PC-3 (cell line): ENCODE measurements at regions of chr2 and their contacts with region 1.

Region 1: DNA sequence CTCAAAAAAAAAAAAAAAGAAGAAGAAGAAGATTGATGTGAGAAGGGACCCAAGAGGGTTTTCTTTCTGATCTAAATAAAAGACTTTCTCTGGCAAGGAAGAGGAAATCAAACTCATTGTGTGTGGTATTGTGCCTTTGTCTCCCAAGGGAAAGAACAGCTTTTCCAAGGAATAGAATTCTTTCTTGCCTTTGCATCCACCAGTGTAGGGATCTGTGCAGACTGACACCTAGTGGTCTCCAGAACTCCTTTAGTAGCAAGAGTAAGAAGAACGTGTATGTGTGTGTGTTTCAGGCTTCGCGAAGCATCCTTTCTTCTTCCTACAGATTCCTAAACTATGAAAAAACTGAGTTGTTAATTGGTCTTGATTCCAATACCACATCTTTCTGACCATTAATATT is 33.5 kb upstream of the CRIM1 start:
- DNase-seq: peak; percentile 51
- ATAC-seq: peak; percentile 70; the same call in 1 of the 2 replicates
- H3K4me3 ChIP-seq: no peak overlapping the region
- H3K27ac ChIP-seq: no peak overlapping the region
- H3K4me1 ChIP-seq: no peaks in the 10 kb centered on the region
- H3K27me3 ChIP-seq: no peaks in the 10 kb centered on the region
- CTCF ChIP-seq: peak; percentile 75

Region 2: GRCh38 chr2:35871672-35872071 is 450.4 kb before region 1 on chr2:
- CTCF ChIA-PET with region 1: no interaction called
- POLR2A ChIA-PET with region 1: no interaction called
- intact Hi-C with region 1: loop called (anchors 5 kb)
- DNase-seq: peak; percentile 61
- ATAC-seq: peak; percentile 60; the same call in 1 of the 2 replicates
- H3K4me3 ChIP-seq: no peak overlapping the region
- H3K27ac ChIP-seq: no peak overlapping the region
- H3K4me1 ChIP-seq: no peaks in the 10 kb centered on the region
- H3K27me3 ChIP-seq: no peaks in the 10 kb centered on the region
- CTCF ChIP-seq: peak; percentile 65

Region 3: DNA sequence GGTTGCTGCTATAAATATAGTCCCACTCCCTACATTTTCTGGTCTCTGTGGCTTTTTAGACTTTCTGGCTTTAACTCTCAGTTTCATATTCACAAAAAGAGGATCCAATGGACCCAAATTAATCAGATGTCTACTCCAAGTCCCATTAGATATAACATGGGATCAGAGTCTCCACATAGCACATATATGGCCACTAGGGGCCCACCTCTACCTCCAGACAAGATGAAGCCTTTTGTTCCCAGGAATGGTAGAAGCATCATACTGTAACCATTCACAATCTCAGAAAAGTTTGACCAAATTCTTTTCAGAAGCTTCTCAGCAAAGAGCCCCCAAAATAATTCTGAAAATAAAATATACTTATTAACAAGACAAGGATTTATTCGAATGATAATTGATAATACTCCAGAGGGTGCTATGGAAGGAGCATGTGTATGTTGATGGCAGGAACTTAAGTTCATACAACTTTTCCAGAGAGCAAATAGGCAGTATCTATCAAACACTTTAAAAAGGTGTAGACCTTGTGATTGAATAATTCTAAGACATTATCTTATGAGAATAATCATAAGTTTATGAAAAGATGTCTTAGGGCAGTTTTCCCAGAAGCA is 348.9 kb before region 1 on chr2:
- CTCF ChIA-PET with region 1: no interaction called
- POLR2A ChIA-PET with region 1: no interaction called
- intact Hi-C with region 1: loop called (anchors 5 kb)
- DNase-seq: peak; percentile 38
- ATAC-seq: peak; percentile 74
- H3K4me3 ChIP-seq: no peak overlapping the region
- H3K27ac ChIP-seq: no peak overlapping the region
- H3K4me1 ChIP-seq: no peaks in the 10 kb centered on the region
- H3K27me3 ChIP-seq: peaks cover 10% of the 10 kb centered on the region; the same call in 1 of the 2 replicates
- CTCF ChIP-seq: peak; percentile 79

Region 4: GRCh38 chr2:36044411-36044810 is 277.7 kb before region 1 on chr2:
- CTCF ChIA-PET with region 1: no interaction called
- POLR2A ChIA-PET with region 1: no interaction called
- intact Hi-C with region 1: no loop called
- DNase-seq: no peak
- ATAC-seq: no peak
- H3K4me3 ChIP-seq: no peak overlapping the region
- H3K27ac ChIP-seq: no peak overlapping the region
- H3K4me1 ChIP-seq: no peaks in the 10 kb centered on the region
- H3K27me3 ChIP-seq: peaks cover 40% of the 10 kb centered on the region
- CTCF ChIP-seq: no peak